Mammary epithelial cell (primary cell): ENCODE measurements at regions of chr10 and their contacts with region 1.

Region 1: DNA sequence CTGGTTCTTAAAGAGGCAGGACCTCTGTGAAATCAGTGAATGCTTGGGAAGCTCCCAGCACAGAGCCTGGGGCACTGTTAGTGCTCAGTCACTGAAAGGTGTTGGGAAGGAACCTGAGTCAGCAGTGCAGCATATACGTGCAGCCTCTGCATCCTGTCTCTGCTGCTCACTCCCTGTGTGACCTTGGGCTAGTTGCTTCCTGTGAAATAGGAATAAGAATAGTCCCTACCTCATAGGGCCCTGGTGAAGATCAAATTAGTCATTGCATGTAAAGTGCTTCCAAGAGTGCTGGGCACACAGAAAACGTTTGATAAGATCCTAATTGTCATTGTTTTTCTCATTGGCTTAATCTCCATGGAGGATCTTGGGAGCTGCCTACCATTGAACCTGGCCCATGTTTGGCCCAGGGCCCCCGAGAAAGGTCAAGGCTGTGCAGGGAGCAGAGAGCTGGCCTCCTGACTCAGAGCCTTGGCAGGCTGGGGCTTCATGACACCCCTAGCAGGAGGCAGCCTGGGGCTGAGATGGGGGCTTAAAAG is 73.3 kb upstream of the COL13A1 start:
- DNase-seq: peak; percentile 94
- H3K4me3 ChIP-seq: no peak overlapping the region
- H3K27ac ChIP-seq: peak overlapping the region; percentile 61
- H3K4me1 ChIP-seq: peaks cover 46% of the 10 kb centered on the region
- H3K27me3 ChIP-seq: no peaks in the 10 kb centered on the region
- CTCF ChIP-seq: no peak

Region 2: DNA sequence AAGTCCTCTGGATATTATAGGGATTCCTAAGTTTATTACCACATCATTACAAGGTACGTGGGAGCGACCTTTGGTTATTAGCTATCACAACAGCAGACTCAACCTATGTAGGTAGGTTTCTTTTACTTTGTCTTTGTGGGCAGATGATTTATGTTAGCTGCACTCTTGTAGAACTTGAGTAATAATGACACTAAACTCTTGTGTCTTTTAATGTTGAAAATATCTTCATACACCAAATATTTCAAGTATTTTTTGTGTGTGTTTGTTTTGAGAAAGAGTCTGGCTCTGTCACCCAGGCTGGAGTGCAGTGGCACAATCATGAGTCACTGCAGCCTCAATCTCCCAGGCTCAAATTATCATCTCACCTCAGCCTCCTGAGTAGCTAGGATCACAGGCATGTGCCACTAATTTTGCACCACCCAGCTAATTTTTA is 567.6 kb before region 1 on chr10:
- CTCF ChIA-PET with region 1: no interaction called
- dilution Hi-C with region 1: no loop called
- in situ Hi-C with region 1: no loop called
- intact Hi-C with region 1: no loop called
- DNase-seq: peak; percentile 14
- H3K4me3 ChIP-seq: no peak overlapping the region
- H3K27ac ChIP-seq: no peak overlapping the region
- H3K4me1 ChIP-seq: no peaks in the 10 kb centered on the region
- H3K27me3 ChIP-seq: no peaks in the 10 kb centered on the region
- CTCF ChIP-seq: no peak

Region 3: GRCh38 chr10:69516316-69516715 is 212.1 kb before region 1 on chr10:
- CTCF ChIA-PET with region 1: no interaction called
- dilution Hi-C with region 1: no loop called
- in situ Hi-C with region 1: no loop called
- intact Hi-C with region 1: no loop called
- DNase-seq: peak; percentile 54
- H3K4me3 ChIP-seq: no peak overlapping the region
- H3K27ac ChIP-seq: no peak overlapping the region
- H3K4me1 ChIP-seq: no peaks in the 10 kb centered on the region
- H3K27me3 ChIP-seq: peaks cover 2% of the 10 kb centered on the region
- CTCF ChIP-seq: peak; percentile 54 to 64

Region 4: GRCh38 chr10:69663369-69663947 is 64.9 kb before region 1 on chr10:
- CTCF ChIA-PET with region 1: no interaction called
- dilution Hi-C with region 1: no loop called
- in situ Hi-C with region 1: no loop called
- intact Hi-C with region 1: no loop called
- DNase-seq: no peak
- H3K4me3 ChIP-seq: no peak overlapping the region
- H3K27ac ChIP-seq: no peak overlapping the region
- H3K4me1 ChIP-seq: no peaks in the 10 kb centered on the region
- H3K27me3 ChIP-seq: no peaks in the 10 kb centered on the region
- CTCF ChIP-seq: no peak

Region 5: DNA sequence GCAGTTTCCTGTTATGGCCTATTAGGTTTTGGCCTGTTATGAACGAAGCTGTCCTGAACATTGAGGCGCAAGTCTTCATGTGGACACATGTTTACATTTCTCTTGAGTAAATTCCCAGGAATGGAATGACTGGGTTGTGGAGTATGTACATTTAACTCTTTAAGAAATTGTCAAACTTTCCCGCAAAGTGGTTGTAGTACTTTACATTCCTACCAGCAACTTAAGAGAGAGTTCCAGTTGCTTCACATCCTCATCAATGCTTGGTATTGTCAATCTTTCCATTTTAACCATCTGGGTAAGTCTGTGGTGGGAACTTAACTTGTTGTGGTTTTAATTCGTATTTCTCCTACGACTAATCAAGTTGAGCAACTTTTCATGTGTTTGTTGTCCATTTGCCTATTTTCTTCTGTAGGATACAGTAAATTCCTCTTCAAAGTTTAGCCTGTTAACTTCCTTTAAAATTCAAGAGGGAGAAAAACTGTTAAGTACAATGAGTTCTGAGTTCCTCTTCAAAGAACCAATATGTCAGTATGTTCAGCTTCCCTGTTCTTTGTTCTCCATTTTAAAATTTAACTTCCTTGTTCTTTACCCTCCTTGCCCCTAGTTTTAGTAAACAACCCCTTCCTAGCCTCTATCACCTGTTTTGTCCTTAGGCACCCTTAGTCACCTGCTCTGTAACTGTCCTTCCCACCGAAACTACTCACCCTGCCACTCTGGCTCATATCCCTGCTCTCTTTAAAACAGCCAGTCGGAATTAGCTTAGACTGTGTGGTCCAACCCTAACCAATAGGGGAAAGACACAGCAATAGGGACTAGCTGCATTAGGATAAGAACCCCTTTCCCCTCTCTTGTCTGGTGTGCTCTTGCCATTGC is 24.4 kb before region 1 on chr10:
- CTCF ChIA-PET with region 1: no interaction called
- dilution Hi-C with region 1: no loop called
- in situ Hi-C with region 1: no loop called
- intact Hi-C with region 1: loop called (anchors 2 kb)
- DNase-seq: peak; percentile 98
- H3K4me3 ChIP-seq: no peak overlapping the region
- H3K27ac ChIP-seq: peak overlapping the region; percentile 81
- H3K4me1 ChIP-seq: peaks cover 22% of the 10 kb centered on the region
- H3K27me3 ChIP-seq: peaks cover 4% of the 10 kb centered on the region
- CTCF ChIP-seq: peak in 1 of 2 donors; percentile 10